ENCODE measurements at regions of chr1 and their contacts with region 1.

Region 1: GRCh38 chr1:8061210-8061609 is 35.1 kb upstream of the ERRFI1 start:
- DNase-seq: peak; percentile 80 to 84
- H3K4me3 ChIP-seq: no peak overlapping the region
- H3K4me3 Mint-ChIP-seq: peak overlapping the region; percentile 57
- H3K27ac Mint-ChIP-seq: peak overlapping the region; percentile 95
- H3K4me1 ChIP-seq: peaks cover 27% of the 10 kb centered on the region
- H3K4me1 Mint-ChIP-seq: peaks cover 8% of the 10 kb centered on the region
- H3K27me3 ChIP-seq: no peaks in the 10 kb centered on the region
- H3K27me3 Mint-ChIP-seq: no peaks in the 10 kb centered on the region
- CTCF ChIP-seq: no peak

Region 2: DNA sequence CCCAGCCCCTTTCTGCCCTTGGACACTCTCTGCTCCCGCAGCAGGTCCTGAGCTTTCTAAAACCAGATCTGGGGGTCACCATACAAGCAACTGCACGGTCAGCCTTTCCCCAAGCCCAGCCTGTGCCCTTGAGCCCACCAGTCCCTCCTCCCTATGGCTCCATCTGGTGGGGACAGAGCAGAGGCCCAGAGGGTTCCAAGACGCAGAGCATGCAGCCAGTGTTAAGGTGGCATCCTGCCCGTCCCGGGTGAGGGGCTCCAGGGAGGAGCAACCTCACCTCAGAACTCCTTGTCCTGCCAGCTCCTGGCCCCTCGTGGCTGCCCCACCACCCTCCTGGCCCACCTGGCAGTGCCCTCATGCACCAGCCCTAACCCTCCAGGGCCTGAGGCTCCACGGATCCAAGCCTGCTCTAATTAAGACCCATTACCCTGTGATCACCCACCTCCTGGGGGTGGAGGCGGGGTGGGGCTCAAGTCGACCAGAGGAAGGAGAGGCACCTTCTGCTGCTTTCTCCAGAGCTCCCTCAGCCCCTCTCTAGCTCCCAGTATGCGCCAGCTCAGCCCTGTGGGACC is 1889.6 kb before region 1 on chr1:
- CTCF ChIA-PET with region 1: interaction called, 10 read pairs
- POLR2A ChIA-PET with region 1: no interaction called
- intact Hi-C with region 1: no loop called
- DNase-seq: no peak
- H3K4me3 ChIP-seq: no peak overlapping the region
- H3K4me3 Mint-ChIP-seq: no peak overlapping the region
- H3K27ac Mint-ChIP-seq: no peak overlapping the region
- H3K4me1 ChIP-seq: no peaks in the 10 kb centered on the region
- H3K4me1 Mint-ChIP-seq: no peaks in the 10 kb centered on the region
- H3K27me3 ChIP-seq: no peaks in the 10 kb centered on the region
- H3K27me3 Mint-ChIP-seq: no peaks in the 10 kb centered on the region
- CTCF ChIP-seq: peak in 1 of 2 experiments; percentile 46

Region 3: GRCh38 chr1:7983086-7983778 is 78.0 kb before region 1 on chr1:
- CTCF ChIA-PET with region 1: no interaction called
- POLR2A ChIA-PET with region 1: no interaction called
- intact Hi-C with region 1: loop called (anchors 1 kb)
- DNase-seq: no peak
- H3K4me3 ChIP-seq: no peak overlapping the region
- H3K4me3 Mint-ChIP-seq: no peak overlapping the region
- H3K27ac Mint-ChIP-seq: no peak overlapping the region
- H3K4me1 ChIP-seq: peaks cover 11% of the 10 kb centered on the region; the same call in 1 of the 2 replicates
- H3K4me1 Mint-ChIP-seq: peaks cover 7% of the 10 kb centered on the region
- H3K27me3 ChIP-seq: no peaks in the 10 kb centered on the region
- H3K27me3 Mint-ChIP-seq: no peaks in the 10 kb centered on the region
- CTCF ChIP-seq: no peak

Region 4: DNA sequence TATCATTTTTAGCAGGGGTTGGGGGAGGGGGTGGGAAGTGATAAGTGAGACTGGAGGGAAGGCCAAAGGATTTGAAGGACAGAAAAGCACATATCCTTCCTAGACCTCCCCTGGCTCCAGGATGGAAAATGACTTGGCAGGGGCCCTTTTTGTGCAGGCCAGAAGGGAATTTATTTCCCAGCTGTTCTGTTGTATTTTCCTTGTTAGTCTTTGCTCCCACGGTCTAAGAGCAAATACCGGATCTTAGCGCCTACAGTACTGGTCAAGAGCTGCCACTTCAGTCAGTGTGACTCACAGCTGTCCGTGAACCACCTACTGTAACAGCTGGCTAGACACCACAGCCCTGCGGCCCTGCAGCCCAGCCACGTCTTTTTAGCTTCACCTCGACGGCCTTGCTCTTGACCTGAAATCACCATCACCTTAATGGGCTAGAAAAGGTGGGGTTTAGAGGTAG is 15.9 kb after region 1 on chr1:
- CTCF ChIA-PET with region 1: no interaction called
- POLR2A ChIA-PET with region 1: interaction called, 4 read pairs
- intact Hi-C with region 1: loop called (anchors 1 kb)
- DNase-seq: peak; percentile 45 to 77
- H3K4me3 ChIP-seq: no peak overlapping the region
- H3K4me3 Mint-ChIP-seq: no peak overlapping the region
- H3K27ac Mint-ChIP-seq: peak overlapping the region; percentile 84
- H3K4me1 ChIP-seq: peaks cover 64% of the 10 kb centered on the region
- H3K4me1 Mint-ChIP-seq: peaks cover 53% of the 10 kb centered on the region
- H3K27me3 ChIP-seq: no peaks in the 10 kb centered on the region
- H3K27me3 Mint-ChIP-seq: no peaks in the 10 kb centered on the region
- CTCF ChIP-seq: no peak

Region 5: DNA sequence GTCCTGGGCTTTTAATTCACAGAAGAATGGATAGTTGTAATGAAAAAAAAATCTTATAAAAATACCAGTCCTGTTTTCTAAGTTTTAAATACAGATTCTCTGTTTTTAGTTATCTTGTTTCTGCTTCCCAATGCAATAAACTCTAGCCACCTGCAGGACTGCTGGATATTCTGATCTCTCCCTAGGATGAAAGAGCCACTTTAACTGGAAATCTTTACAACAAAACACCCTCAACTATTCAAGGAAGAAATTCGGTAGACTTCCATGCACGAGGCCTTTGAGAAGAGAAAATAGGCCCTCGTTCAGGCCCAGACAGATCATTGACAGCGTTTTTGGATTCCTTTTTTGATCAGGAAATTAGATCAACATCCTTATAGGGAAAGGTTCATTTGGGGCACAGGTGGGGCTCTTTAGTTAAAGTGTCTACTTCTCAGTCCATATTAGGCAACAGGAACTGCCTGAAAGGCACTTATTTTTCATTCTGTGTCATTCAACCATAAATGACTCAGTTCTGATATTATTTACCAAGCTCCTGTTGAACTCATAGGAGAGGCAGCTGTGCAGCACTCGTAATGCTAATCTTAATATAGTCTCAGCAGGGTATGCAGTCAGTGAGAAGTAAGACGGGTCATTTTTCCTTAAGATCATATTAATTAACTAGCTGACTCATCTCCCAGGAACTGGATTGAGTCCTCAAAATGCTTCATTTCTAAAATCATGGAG is 36.0 kb after region 1 on chr1:
- CTCF ChIA-PET with region 1: no interaction called
- POLR2A ChIA-PET with region 1: no interaction called
- intact Hi-C with region 1: loop called (anchors 1 kb)
- DNase-seq: peak in 1 of 2 experiments; percentile 16
- H3K4me3 ChIP-seq: no peak overlapping the region
- H3K4me3 Mint-ChIP-seq: peak overlapping the region; percentile 34
- H3K27ac Mint-ChIP-seq: peak overlapping the region; percentile 86
- H3K4me1 ChIP-seq: peaks cover 46% of the 10 kb centered on the region
- H3K4me1 Mint-ChIP-seq: peaks cover 38% of the 10 kb centered on the region
- H3K27me3 ChIP-seq: no peaks in the 10 kb centered on the region
- H3K27me3 Mint-ChIP-seq: no peaks in the 10 kb centered on the region
- CTCF ChIP-seq: no peak

Region 6: DNA sequence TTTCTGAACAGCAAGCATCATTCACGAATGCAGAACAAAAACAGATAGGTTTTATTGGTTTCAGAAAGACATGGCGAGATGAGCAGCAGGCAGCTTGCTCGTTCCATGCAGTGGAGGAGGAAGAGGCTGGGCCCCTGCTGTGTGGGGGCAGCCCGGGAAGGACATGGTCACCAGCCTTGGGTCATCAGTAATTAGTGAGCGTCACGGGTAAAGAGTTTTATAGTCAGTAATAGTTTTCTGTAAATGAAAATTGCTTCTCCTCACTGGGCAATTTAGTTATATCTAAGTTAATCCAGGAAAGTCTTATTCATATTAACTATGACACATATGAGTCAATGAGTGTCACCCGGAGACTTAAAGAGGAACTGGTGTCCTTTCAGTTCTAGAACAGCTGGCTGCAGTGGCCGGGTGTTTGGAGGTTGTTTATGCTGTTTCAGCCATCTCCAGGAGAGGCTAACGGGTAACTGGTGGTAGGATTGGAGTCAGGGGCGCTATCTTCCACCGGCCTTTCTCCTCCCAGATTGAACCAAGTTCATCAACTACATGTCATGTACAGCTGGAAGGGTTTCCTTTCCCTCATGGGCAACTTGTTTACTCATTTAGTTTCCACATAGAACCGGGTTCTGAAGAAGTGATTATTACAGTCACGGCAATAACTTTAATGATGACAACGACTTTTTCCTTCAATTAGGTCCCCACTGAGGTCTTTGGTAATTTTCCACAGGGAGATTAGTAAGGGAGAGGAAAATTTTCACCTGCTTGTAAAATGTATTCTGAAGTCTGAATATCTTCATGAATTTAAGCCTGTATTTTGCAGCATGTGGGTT is 222.1 kb after region 1 on chr1:
- CTCF ChIA-PET with region 1: no interaction called
- POLR2A ChIA-PET with region 1: no interaction called
- intact Hi-C with region 1: no loop called
- DNase-seq: no peak
- H3K4me3 ChIP-seq: no peak overlapping the region
- H3K4me3 Mint-ChIP-seq: no peak overlapping the region
- H3K27ac Mint-ChIP-seq: no peak overlapping the region
- H3K4me1 ChIP-seq: no peaks in the 10 kb centered on the region
- H3K4me1 Mint-ChIP-seq: no peaks in the 10 kb centered on the region
- H3K27me3 ChIP-seq: no peaks in the 10 kb centered on the region
- H3K27me3 Mint-ChIP-seq: no peaks in the 10 kb centered on the region
- CTCF ChIP-seq: no peak